Psoas muscle (tissue), 8 donors: ENCODE measurements at regions of chr1 and their contacts with region 1.

Region 1: DNA sequence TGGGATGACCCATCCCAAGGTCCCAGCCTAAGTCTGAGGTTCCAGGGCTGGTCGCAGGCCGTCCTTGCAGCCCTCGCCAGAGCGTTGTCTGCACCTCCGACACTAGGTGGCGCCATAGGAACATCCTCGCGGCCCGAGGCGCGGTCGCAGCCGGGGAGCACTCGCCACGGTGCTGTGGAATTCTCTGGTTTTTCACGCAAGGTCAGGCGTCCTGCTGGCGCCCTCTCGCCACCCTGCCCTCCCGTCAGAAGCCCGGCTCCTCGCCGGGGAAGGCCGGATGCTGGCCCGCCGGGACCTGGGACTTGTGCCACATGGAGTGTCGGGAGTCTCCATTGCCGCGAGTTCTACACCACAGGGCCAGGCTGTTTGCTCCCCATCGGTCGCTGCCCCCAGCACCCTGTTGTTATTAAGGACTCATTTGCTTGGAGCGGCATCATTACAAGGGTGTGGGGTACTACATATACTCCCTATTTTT is 196.8 kb upstream of the LMO4 start:
- DNase-seq: peak; percentile 75 to 88
- ATAC-seq: peak; percentile 86 to 93 (median 90)
- H3K4me3 ChIP-seq: peak overlapping the region; percentile 60
- H3K27ac ChIP-seq: no peak overlapping the region
- H3K4me1 ChIP-seq: no peaks in the 10 kb centered on the region
- H3K27me3 ChIP-seq: peaks cover 0 to 3% (median 0%) of the 10 kb centered on the region in 3 donors
- CTCF ChIP-seq: peak; percentile 84

Region 2: GRCh38 chr1:87328272-87329050 is 196.6 kb after region 1 on chr1 and contains the start of gene LMO4:
- intact Hi-C with region 1: loop called in 1 of 2 experiments (anchors 5 kb)
- DNase-seq: peak; percentile 96 to 97
- ATAC-seq: peak; percentile 86 to 95 (median 92)
- H3K4me3 ChIP-seq: peak within 1 kb of the TSS; percentile 71
- H3K27ac ChIP-seq: peak within 1 kb of the TSS; percentile 92
- H3K4me1 ChIP-seq: peaks cover 14% of the 10 kb centered on the region
- H3K27me3 ChIP-seq: no peaks in the 10 kb centered on the region
- CTCF ChIP-seq: no peak
- total RNA-seq, gene LMO4: 25.2 to 32.3 (median 28.3) TPM

Region 3: GRCh38 chr1:88052167-88052566 is 920.3 kb after region 1 on chr1:
- intact Hi-C with region 1: loop called in 1 of 2 experiments (anchors 5 kb)
- DNase-seq: no peak
- ATAC-seq: no peak
- H3K4me3 ChIP-seq: no peak overlapping the region
- H3K27ac ChIP-seq: no peak overlapping the region
- H3K4me1 ChIP-seq: no peaks in the 10 kb centered on the region
- H3K27me3 ChIP-seq: no peaks in the 10 kb centered on the region
- CTCF ChIP-seq: no peak